Sciatic nerve (tissue), 2 donors: ENCODE measurements at regions of chr10 and their contacts with region 1.

Region 1: DNA sequence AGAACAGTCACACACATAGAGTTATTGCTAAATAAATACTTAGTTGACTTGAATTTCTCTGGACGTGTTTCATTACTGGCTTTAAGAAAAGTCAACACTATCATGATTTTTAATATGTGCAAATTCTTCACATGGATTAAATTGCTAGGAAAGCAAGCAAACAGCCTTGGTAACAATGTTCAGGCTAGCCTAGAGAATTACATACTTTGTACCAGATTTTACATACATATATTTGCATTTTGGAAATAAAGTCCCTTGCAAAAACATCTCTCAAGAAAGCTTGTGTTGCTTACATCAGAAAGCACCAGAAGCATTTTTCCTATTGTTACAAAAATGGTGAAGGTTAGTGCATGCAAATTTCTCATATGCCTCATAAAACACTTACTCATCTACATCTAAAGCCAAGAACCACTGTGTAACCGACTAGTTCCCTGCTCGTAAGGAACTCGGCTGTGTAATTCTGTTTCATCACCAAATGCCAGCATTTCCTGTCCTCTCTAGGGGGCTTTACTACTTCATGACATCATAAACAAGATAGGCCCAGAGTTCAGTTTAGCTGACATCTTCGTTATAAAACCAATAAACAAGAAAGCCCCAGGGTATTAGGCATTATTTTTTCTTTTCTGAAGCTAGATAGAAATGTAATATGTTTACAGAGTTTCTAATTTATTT is 87.8 kb downstream of the CFAP58 start:
- DNase-seq: no peak
- ATAC-seq: peak; percentile 82

Region 2: GRCh38 chr10:105793071-105793470 is 1351.6 kb after region 1 on chr10:
- intact Hi-C with region 1: loop called (anchors 5 kb)
- DNase-seq: no peak
- ATAC-seq: peak; percentile 28